ENCODE measurements at regions of chr6 and their contacts with region 1.

Region 1: GRCh38 chr6:79949233-79949632 is 1.9 kb upstream of the ELOVL4 start:
- DNase-seq: no peak
- ATAC-seq: no peak
- H3K4me3 ChIP-seq: no peak overlapping the region
- H3K27ac ChIP-seq: no peak overlapping the region
- H3K4me1 ChIP-seq: no peaks in the 10 kb centered on the region
- H3K27me3 ChIP-seq: peaks cover 0 to 40% (median 18%) of the 10 kb centered on the region in 3 donors
- CTCF ChIP-seq: peak; percentile 42

Region 2: DNA sequence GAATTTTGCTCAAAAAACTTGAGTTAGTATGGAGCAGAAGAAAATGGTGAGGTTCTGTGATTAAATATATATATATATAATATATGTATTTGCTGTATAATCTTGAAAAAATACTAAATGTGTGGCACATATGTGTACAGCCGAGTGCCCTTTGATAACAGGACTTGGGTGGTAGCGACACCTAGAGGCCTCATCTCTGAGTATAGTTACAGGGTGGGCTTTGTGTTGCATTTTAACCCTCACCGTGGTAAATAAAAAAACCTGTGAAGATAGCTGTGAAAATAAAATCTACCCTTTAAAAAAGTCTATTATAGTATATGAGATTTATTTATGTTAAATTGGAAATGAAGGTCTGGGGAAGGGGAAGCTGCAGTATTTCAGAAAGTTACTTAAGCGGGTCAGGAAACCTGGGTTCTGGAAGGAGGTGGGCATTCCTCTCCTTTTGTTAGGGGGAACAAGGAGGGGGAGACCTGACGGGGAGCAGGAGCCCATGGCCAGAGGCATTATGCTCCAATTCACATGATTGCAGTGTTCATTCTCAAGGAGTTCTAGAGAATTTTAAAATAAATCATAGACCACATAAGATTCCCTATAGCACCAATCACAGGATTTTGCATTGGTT is 235.4 kb before region 1 on chr6:
- intact Hi-C with region 1: no loop called
- DNase-seq: peak in 1 of 2 donors; percentile 17
- ATAC-seq: peak in 1 of 4 donors; percentile 74
- H3K4me3 ChIP-seq: no peak overlapping the region
- H3K27ac ChIP-seq: no peak overlapping the region
- H3K4me1 ChIP-seq: no peaks in the 10 kb centered on the region
- H3K27me3 ChIP-seq: no peaks in the 10 kb centered on the region
- CTCF ChIP-seq: peak; percentile 60

Region 3: GRCh38 chr6:80094017-80094416 is 144.8 kb after region 1 on chr6:
- intact Hi-C with region 1: loop called (anchors 5 kb)
- DNase-seq: no peak
- ATAC-seq: no peak
- H3K4me3 ChIP-seq: no peak overlapping the region
- H3K27ac ChIP-seq: no peak overlapping the region
- H3K4me1 ChIP-seq: no peaks in the 10 kb centered on the region
- H3K27me3 ChIP-seq: no peaks in the 10 kb centered on the region
- CTCF ChIP-seq: peak; percentile 49

Region 4: GRCh38 chr6:80106418-80107235 is 157.4 kb after region 1 on chr6 and contains the start of gene BCKDHB:
- intact Hi-C with region 1: no loop called
- DNase-seq: peak; percentile 99
- ATAC-seq: peak; percentile 99 to 100 (median 100)
- H3K4me3 ChIP-seq: peak within 1 kb of the TSS; percentile 93
- H3K27ac ChIP-seq: peak within 1 kb of the TSS; percentile 84
- H3K4me1 ChIP-seq: peaks cover 8% of the 10 kb centered on the region
- H3K27me3 ChIP-seq: no peaks in the 10 kb centered on the region
- CTCF ChIP-seq: no peak
- total RNA-seq, gene BCKDHB: 6.5 to 13.9 (median 7.0) TPM

Measured in psoas muscle (tissue), 8 donors.